ENCODE measurements at regions of chr19 and their contacts with region 1.

Region 1: DNA sequence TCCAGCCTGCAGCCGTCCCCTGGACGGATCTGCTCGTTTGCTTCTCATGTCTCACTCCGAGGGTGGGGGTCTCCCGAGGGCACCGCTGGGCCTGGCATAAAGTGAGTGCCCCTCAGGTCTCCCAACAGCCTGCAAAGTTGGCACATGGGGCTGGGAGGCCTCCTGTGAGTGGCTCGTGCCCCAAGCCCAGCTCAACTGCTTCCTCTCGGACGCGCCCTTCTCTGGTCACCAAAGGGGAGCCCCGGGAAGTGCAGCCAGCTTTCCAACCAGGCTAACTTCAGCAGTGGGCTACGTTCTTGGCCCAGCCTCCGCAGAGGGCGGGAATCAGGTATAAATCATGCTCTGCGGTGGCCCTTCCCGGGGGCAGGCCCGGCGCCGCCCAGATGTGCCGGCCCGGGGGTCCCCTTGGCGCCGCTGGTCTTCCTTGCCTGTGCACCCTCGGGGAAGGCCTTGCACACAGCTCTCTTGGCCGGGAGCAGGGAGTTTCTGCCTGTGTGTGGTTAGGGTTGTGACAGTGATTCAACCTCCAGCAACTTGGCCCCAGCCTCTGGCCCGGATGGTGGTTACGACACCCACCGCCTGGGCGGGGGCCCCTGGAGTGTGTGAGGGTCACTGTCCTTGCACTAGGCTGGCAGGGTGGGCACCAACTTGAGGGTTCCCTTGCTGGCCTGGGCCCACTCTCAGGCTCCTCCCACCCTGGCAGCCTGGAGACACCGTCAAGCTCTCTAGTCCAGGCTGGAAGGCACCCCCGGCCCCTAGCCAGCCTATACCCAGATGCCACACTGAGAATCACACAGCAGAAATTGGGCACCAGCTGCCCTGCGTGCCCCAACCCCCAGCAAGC is 20.7 kb downstream of the CEBPG start:
- DNase-seq: no peak
- ATAC-seq: peak; percentile 31
- H3K4me3 ChIP-seq: no peak overlapping the region
- H3K27ac ChIP-seq: no peak overlapping the region
- H3K4me1 ChIP-seq: peaks cover 48% of the 10 kb centered on the region
- H3K27me3 ChIP-seq: no peaks in the 10 kb centered on the region
- CTCF ChIP-seq: no peak

Region 2: GRCh38 chr19:33235269-33235995 is 158.8 kb before region 1 on chr19:
- CTCF ChIA-PET with region 1: no interaction called
- POLR2A ChIA-PET with region 1: interaction called, 6 read pairs
- in situ Hi-C with region 1: no loop called
- intact Hi-C with region 1: loop called (anchors 5 kb)
- DNase-seq: peak; percentile 47
- ATAC-seq: peak; percentile 88
- H3K4me3 ChIP-seq: 0 out of 4 replicates have a peak overlapping the region, but pooled peaks of 1 of the 2 experiments have one; percentile 8
- H3K27ac ChIP-seq: no peak overlapping the region
- H3K4me1 ChIP-seq: peaks cover 4% of the 10 kb centered on the region; the same call in 1 of the 2 replicates
- H3K27me3 ChIP-seq: no peaks in the 10 kb centered on the region
- CTCF ChIP-seq: peak; percentile 99

Region 3: DNA sequence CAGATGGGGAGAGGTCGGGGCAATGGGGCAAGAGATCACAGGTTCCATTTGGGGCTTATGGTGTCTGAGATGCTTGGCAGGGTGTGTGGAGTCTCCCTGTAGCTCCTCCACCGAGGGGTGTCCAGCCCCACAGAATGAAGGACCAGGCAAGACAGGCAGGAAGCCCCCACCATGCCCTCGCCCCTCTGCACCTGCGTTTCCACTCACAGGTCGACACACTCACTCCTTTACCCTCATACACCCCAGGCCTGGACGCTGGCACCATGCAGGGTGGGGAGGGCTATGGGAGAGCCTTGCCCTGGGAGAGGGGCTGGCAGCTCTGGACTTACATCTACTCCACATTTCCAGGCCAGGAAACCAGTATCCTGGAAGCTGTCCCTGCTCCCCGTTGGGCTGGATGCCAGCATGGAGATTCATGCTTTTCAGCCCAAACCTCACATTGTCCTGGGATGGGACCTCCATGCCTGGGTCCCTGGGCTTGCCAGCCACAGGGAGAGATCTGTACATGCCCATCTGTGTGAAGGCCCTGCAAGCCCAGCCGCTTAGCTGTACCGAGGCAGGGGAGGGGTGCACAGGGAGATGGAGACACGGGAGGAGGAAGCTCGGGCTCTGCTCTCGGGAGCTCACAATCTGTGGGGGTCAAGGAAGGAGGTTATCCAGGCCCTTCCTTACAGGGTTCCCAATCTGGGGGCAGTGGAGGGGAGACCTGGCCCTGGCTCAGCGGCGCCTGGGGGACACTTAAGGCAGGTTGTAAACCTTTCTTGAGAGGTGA is 304.6 kb after region 1 on chr19:
- CTCF ChIA-PET with region 1: interaction called, 11 read pairs
- POLR2A ChIA-PET with region 1: no interaction called
- in situ Hi-C with region 1: no loop called
- intact Hi-C with region 1: no loop called
- DNase-seq: no peak
- ATAC-seq: no peak; the same call in 1 of the 2 replicates
- H3K4me3 ChIP-seq: no peak overlapping the region
- H3K27ac ChIP-seq: no peak overlapping the region
- H3K4me1 ChIP-seq: no peaks in the 10 kb centered on the region
- H3K27me3 ChIP-seq: no peaks in the 10 kb centered on the region; the same call in 1 of the 2 replicates
- CTCF ChIP-seq: no peak

Measured in Panc1 (cell line).